ENCODE measurements at regions of chr2 and their contacts with region 1.

Region 1: DNA sequence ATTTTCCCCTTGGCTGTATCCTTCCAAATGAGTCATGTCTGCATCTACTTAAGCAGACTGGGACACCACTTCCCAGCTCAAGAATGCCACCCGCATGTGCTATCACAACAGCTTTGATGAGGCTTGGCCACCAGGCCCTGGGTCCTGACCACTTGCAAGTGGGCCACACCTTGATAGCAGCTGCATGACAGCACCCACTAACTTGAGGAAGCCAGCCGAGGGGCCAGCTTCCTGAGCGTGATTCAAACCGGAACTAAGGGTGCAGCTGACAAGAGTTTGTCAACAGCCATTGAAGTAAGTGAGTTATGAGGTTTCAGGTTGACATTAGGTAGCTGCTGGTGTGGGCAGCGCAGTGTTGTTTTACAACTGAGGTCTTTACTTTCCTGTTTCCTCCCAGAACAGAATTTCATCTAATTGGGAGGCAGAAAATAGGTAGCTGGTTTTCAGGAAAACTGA is 54.4 kb downstream of the EPHA4 start:
- DNase-seq: peak; percentile 91
- ATAC-seq: peak; percentile 88
- H3K4me3 ChIP-seq: peak overlapping the region; percentile 53; the same call in 1 of the 2 replicates
- H3K27ac ChIP-seq: peak overlapping the region; percentile 93
- H3K4me1 ChIP-seq: peaks cover 38% of the 10 kb centered on the region
- H3K27me3 ChIP-seq: no peaks in the 10 kb centered on the region
- CTCF ChIP-seq: no peak

Region 2: DNA sequence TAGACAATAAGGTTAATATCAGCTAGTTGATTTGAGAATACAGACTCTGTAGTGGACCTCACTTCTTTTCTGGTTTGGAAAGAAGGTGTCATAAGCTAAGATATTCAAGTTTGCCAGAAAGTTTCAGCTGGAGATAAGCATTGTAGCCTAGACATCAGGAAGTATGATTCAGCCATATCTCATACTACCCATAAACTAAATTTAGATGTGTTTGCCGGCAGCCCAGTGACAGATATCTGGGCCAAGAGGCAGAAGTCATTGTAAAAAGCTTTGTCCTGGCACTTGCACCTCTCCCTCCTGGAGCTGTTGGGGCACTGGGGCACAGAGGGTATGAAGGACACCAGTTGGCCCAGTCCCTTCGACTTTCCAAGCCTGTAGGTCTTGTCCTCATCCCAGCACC is 73.6 kb before region 1 on chr2:
- CTCF ChIA-PET with region 1: interaction called, 3 read pairs
- POLR2A ChIA-PET with region 1: interaction called, 5 read pairs
- intact Hi-C with region 1: loop called (anchors 5 kb)
- DNase-seq: peak; percentile 77
- ATAC-seq: peak; percentile 93
- H3K4me3 ChIP-seq: no peak overlapping the region
- H3K27ac ChIP-seq: peak overlapping the region; percentile 52
- H3K4me1 ChIP-seq: peaks cover 31% of the 10 kb centered on the region
- H3K27me3 ChIP-seq: no peaks in the 10 kb centered on the region
- CTCF ChIP-seq: no peak

Region 3: DNA sequence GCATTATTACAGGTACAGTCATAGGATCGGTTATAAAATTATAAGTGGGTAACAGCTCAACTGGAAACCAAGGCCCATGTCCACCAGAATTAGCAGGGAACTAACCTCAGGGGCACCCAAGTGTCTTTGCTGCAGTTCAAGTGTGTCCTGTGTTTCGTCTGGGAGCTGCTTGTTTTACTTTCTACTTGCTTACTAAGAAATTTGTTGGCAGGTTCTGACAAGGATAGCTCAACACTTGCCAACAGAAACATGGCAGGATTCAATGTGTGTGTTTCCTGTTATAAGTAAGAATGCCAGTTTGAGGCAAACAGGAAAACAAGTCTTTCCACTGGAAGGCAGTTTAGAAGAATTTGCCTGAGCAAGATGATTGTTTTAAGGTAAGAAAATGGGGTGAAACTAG is 50.1 kb before region 1 on chr2:
- CTCF ChIA-PET with region 1: no interaction called
- POLR2A ChIA-PET with region 1: interaction called, 17 read pairs
- intact Hi-C with region 1: no loop called
- DNase-seq: no peak
- ATAC-seq: no peak
- H3K4me3 ChIP-seq: no peak overlapping the region
- H3K27ac ChIP-seq: no peak overlapping the region
- H3K4me1 ChIP-seq: no peaks in the 10 kb centered on the region
- H3K27me3 ChIP-seq: no peaks in the 10 kb centered on the region
- CTCF ChIP-seq: no peak

Region 4: GRCh38 chr2:221529943-221530652 is 12.4 kb after region 1 on chr2:
- CTCF ChIA-PET with region 1: no interaction called
- POLR2A ChIA-PET with region 1: no interaction called
- intact Hi-C with region 1: loop called (anchors 1 kb)
- DNase-seq: peak; percentile 82
- ATAC-seq: peak; percentile 93
- H3K4me3 ChIP-seq: peak overlapping the region; percentile 46
- H3K27ac ChIP-seq: 0 out of 2 replicates have a peak overlapping the region, but pooled peaks have one; percentile 26
- H3K4me1 ChIP-seq: peaks cover 18% of the 10 kb centered on the region
- H3K27me3 ChIP-seq: no peaks in the 10 kb centered on the region
- CTCF ChIP-seq: no peak

Region 5: DNA sequence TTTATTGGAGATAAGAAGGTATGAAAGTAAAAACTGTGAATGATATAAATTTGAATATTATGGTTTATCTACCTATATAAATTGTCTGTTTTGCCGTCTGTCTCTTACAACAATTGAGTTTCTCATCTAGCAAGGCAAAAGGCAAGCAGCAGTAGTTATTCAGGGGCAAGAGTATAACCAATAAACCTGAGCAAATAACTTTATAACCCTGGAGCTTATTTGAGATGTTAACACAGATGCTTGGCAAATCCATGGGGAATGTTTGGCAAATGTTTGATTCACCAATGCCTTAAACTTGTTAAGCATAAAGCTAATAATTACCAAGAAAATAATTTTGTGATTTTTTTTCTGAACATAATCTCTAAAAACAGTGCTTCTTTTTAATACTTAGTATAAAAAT is 64.3 kb after region 1 on chr2:
- CTCF ChIA-PET with region 1: no interaction called
- POLR2A ChIA-PET with region 1: no interaction called
- intact Hi-C with region 1: no loop called
- DNase-seq: no peak
- ATAC-seq: peak; percentile 54
- H3K4me3 ChIP-seq: no peak overlapping the region
- H3K27ac ChIP-seq: no peak overlapping the region
- H3K4me1 ChIP-seq: no peaks in the 10 kb centered on the region
- H3K27me3 ChIP-seq: peaks cover 64% of the 10 kb centered on the region
- CTCF ChIP-seq: no peak

Measured in PC-3 (cell line).